CD4-positive, alpha-beta T cell (primary cell): ENCODE measurements at regions of chr6 and their contacts with region 1.

Region 1: GRCh38 chr6:31525932-31526591 is 2.7 kb upstream of the MCCD1 start:
- DNase-seq: no peak
- ATAC-seq: no peak
- H3K4me3 ChIP-seq: no peak overlapping the region
- H3K4me3 Mint-ChIP-seq: no peak overlapping the region
- H3K27ac ChIP-seq: no peak overlapping the region
- H3K27ac Mint-ChIP-seq: no peak overlapping the region
- H3K4me1 ChIP-seq: no peaks in the 10 kb centered on the region
- H3K4me1 Mint-ChIP-seq: no peaks in the 10 kb centered on the region
- H3K27me3 ChIP-seq: no peaks in the 10 kb centered on the region
- H3K27me3 Mint-ChIP-seq: no peaks in the 10 kb centered on the region
- CTCF ChIP-seq: no peak

Region 2: DNA sequence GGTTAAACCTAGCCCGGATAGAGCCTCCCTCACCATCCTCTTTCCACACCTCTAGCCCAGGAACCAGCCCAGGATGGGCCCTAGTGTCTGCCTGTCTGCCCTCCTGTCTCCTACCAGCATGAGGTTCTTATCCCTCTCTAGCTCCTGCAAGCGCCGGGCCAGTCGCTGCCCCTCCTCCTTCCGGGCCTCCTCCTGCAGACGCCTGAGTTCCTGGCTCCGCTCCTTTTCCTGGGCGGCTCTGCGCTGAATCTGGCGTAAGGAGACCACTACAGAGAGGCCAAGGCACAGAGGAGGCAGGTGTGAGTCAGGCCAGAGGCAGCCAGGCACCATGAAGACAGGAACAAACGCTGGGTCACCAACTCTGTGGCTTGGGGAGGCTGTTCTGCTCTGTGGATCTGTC is 382.9 kb before region 1 on chr6:
- CTCF ChIA-PET with region 1: no interaction called
- POLR2A ChIA-PET with region 1: no interaction called
- intact Hi-C with region 1: loop called in 1 of 2 experiments (anchors 1 kb)
- DNase-seq: no peak
- ATAC-seq: no peak
- H3K4me3 ChIP-seq: no peak overlapping the region
- H3K4me3 Mint-ChIP-seq: no peak overlapping the region
- H3K27ac ChIP-seq: no peak overlapping the region
- H3K27ac Mint-ChIP-seq: no peak overlapping the region
- H3K4me1 ChIP-seq: no peaks in the 10 kb centered on the region
- H3K4me1 Mint-ChIP-seq: no peaks in the 10 kb centered on the region
- H3K27me3 ChIP-seq: no peaks in the 10 kb centered on the region
- H3K27me3 Mint-ChIP-seq: no peaks in the 10 kb centered on the region
- CTCF ChIP-seq: no peak

Region 3: GRCh38 chr6:31356946-31357466 is 169.1 kb before region 1 on chr6 and contains the start of gene HLA-B:
- CTCF ChIA-PET with region 1: no interaction called
- POLR2A ChIA-PET with region 1: no interaction called
- intact Hi-C with region 1: no loop called
- DNase-seq: peak; percentile 67 to 99 (median 76)
- ATAC-seq: peak; percentile 84
- H3K4me3 ChIP-seq: peak within 1 kb of the TSS; percentile 76
- H3K4me3 Mint-ChIP-seq: peak within 1 kb of the TSS; percentile 100
- H3K27ac ChIP-seq: peak within 1 kb of the TSS; percentile 97 to 99
- H3K27ac Mint-ChIP-seq: peak within 1 kb of the TSS; percentile 100
- H3K4me1 ChIP-seq: peaks cover 50% of the 10 kb centered on the region
- H3K4me1 Mint-ChIP-seq: peaks cover 71% of the 10 kb centered on the region
- H3K27me3 ChIP-seq: no peaks in the 10 kb centered on the region
- H3K27me3 Mint-ChIP-seq: peaks cover 5% of the 10 kb centered on the region
- CTCF ChIP-seq: no peak
- total RNA-seq, gene HLA-B: 6,758 to 7,013 TPM

Region 4: GRCh38 chr6:31473780-31474725 is 52.0 kb before region 1 on chr6:
- CTCF ChIA-PET with region 1: no interaction called
- POLR2A ChIA-PET with region 1: no interaction called
- intact Hi-C with region 1: loop called in 1 of 2 experiments (anchors 2 kb)
- DNase-seq: peak in 1 of 14 experiments; percentile 42
- ATAC-seq: no peak
- H3K4me3 ChIP-seq: no peak overlapping the region
- H3K4me3 Mint-ChIP-seq: peak overlapping the region; percentile 34
- H3K27ac ChIP-seq: no peak overlapping the region
- H3K27ac Mint-ChIP-seq: peak overlapping the region; percentile 5
- H3K4me1 ChIP-seq: peaks cover 50% of the 10 kb centered on the region
- H3K4me1 Mint-ChIP-seq: peaks cover 64% of the 10 kb centered on the region
- H3K27me3 ChIP-seq: no peaks in the 10 kb centered on the region
- H3K27me3 Mint-ChIP-seq: no peaks in the 10 kb centered on the region
- CTCF ChIP-seq: no peak